Calu3 (cell line): ENCODE measurements at regions of chr7 and their contacts with region 1.

Region 1: GRCh38 chr7:35714862-35715261 is 19.9 kb upstream of the HERPUD2 start:
- DNase-seq: peak; percentile 42
- H3K4me3 Mint-ChIP-seq: no peak overlapping the region
- H3K27ac Mint-ChIP-seq: no peak overlapping the region
- H3K4me1 Mint-ChIP-seq: peaks cover 30% of the 10 kb centered on the region
- H3K27me3 Mint-ChIP-seq: no peaks in the 10 kb centered on the region
- CTCF ChIP-seq: no peak

Region 2: DNA sequence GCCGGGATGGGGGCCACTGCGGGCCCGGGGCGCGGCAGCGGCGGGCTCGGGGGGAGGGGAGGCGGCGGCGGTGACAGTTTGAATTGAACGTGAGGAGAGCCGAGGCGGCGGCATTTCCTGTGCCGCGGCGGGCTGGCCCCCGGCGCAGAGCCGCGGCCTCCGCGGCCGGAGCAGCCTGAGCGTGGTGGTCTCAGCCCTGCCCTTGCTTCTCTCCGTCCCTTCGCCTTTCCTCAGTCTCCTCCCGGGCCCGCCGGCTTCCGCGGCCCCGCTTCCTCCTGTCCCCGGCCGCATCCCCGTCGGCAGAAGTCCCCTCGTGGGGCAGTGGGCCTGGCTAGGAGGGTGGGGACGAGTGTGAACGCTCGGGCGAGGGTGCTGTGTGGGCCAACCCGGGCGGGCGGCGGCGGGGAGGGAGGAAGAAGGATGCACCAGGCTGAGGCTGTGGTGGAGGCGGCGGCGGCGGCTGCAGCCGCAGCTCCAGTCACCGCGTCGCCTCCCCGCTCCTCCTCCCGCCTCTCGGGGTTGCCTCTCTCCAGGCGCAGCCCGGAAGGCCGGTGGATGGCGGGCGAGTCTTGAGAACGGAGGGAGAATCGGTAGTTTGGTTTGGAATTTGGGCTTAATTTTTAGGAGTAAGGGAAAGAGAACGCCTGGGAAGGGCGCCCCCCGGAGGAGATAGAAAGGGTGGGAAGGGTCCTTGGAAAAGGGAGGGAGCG is 86.7 kb after region 1 on chr7:
- CTCF ChIA-PET with region 1: interaction called, 16 read pairs
- intact Hi-C with region 1: no loop called
- DNase-seq: peak; percentile 79
- H3K4me3 Mint-ChIP-seq: peak overlapping the region; percentile 88
- H3K27ac Mint-ChIP-seq: peak overlapping the region; percentile 66
- H3K4me1 Mint-ChIP-seq: peaks cover 43% of the 10 kb centered on the region
- H3K27me3 Mint-ChIP-seq: no peaks in the 10 kb centered on the region
- CTCF ChIP-seq: peak; percentile 71

Region 3: GRCh38 chr7:35906191-35906908 is 191.5 kb after region 1 on chr7:
- CTCF ChIA-PET with region 1: interaction called, 16 read pairs
- intact Hi-C with region 1: no loop called
- DNase-seq: peak; percentile 82
- H3K4me3 Mint-ChIP-seq: no peak overlapping the region
- H3K27ac Mint-ChIP-seq: no peak overlapping the region
- H3K4me1 Mint-ChIP-seq: no peaks in the 10 kb centered on the region
- H3K27me3 Mint-ChIP-seq: no peaks in the 10 kb centered on the region
- CTCF ChIP-seq: peak; percentile 97